ENCODE measurements at regions of chr17 and their contacts with region 1.

Region 1: DNA sequence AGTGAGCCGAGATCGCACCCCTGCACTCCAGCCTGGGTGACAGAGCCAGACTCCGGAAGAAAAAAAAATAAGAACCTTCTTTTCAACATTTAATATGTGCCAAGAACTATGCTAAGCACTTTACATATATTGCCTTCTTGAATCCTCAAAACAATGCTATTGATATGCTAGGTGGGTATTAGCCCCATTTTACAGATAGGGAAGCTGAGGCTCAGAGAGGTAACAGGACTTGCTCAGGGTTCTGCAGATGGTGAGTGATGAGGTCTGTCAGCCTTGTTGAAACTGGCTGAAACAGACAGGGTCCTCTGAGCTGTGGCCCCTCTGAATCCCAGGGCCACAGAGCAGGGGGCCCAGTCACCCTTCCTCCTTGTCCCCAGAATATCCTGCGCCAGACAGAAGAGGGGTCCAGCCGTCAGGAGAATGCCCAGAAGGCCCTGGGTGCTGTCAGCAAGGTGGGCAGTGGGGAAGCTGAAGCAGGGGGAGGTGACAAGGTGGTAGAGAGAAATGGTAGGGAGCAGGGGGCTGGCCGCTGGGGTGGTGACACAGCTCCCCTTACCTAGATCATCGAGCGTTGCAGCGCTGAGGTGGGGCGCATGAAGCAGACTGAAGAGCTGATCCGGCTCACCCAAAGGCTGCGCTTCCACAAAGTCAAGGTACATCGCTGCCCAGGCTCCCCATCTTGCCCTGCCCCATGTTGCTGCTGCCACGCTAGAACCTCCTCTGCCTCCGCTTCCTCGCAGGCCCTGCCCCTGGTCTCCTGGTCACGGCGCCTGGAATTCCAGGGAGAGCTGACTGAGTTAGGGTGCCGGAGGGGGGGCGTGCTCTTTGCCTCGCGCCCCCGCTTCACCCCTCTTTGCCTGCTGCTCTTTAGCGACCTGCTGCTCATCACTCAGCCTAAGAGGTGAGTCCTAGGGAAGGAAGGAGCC is 8.2 kb downstream of the ARHGEF15 start:
- DNase-seq: no peak
- CTCF ChIP-seq: no peak

Region 2: GRCh38 chr17:8300627-8301242 is 17.5 kb before region 1 on chr17:
- CTCF ChIA-PET with region 1: interaction called, 17 read pairs
- POLR2A ChIA-PET with region 1: no interaction called
- DNase-seq: peak; percentile 86
- CTCF ChIP-seq: peak; percentile 88

Region 3: DNA sequence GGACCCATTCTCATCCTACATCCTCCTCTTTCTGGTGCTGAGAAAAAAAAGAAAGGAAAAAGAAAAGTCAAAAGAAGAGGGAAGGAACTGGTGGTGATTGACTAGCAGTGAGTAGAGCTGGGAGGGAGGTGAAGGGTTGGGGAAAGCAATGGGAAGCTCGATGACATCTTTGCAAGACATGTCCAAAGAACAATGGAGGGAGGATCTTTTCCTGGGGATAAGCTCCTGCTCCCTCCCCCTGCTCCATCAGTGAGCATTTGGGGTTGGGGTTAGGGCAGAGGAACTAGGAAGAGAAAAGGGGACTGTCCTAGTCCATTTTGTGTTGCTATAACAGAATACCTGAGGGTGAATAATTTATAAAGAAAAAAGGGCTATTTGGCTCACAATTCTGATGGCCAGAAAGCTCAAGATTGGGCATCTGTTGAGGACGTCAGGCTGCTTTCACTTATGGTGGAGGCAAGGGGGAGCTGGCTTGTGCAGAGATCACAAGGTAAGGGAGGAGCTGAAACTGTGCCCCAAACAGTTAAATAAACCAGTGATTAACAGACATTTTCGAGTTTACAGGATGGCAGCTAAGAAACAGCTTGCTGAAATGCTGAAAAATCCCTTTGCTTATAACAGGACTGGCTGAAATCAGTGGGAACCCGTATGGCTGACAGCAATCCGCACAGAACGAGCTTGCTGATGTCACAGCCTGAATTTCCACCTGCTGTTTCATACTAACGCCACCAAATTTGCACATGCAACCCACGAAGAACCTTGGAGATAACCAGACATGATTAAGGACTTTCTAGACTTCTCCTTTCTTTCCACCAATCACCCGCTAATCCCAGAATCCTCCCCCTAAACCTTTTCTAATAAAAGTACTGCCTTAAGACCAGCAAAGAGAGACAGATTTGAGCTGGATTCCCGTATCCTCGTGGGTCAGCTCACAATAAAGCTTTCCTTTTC is 19.8 kb after region 1 on chr17:
- CTCF ChIA-PET with region 1: no interaction called
- POLR2A ChIA-PET with region 1: no interaction called
- DNase-seq: no peak
- CTCF ChIP-seq: no peak